ENCODE measurements at regions of chr19 and their contacts with region 1.

Region 1: DNA sequence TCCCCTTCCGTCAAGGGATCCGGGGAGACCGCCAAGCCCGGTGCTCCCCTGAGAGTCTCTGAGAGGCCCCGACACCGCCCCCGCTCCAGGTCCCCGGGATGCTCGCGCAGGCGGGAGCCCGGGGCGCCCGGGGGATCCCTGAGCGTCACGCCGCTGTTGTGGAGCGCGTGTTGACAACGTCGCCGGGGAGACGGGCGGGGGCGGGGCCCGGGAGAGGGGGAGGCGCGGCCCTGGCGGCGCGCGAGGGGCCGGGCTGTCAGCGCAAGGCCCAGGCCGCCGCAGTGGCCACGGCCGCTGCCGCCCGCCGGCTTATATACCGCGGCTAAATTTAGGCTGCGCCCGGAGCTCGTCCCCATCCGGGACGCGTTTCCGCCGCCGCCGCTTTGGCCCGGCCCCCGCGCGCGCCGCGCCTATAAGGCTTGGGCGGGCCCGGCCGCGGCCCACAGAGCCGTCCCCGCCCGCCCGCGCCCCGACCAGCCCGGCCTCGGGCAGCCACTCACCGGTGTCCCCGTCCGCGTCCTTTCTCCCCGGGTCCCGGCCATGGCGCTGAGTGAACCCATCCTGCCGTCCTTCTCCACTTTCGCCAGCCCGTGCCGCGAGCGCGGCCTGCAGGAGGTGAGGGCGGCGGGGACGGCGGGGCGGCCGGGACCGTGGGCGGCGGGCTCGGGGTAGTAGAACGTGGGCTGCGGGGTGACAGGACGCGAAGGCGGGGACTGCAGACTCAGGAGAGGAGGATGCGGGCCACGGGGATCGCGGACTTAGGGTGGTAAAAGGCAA is at the start of gene KLF2:
- DNase-seq: peak; percentile 95 to 97
- ATAC-seq: peak; percentile 69 to 92 (median 84)
- H3K4me3 ChIP-seq: peak within 1 kb of the TSS; percentile 61 to 96 (median 87)
- H3K27ac ChIP-seq: peak within 1 kb of the TSS; percentile 93 to 99 (median 98)
- H3K4me1 ChIP-seq: peaks cover 0 to 50% (median 35%) of the 10 kb centered on the region in 9 donors
- H3K27me3 ChIP-seq: no peaks in the 10 kb centered on the region
- CTCF ChIP-seq: no peak
- total RNA-seq, gene KLF2: 25.5 to 76.2 (median 50.4) TPM

Region 2: DNA sequence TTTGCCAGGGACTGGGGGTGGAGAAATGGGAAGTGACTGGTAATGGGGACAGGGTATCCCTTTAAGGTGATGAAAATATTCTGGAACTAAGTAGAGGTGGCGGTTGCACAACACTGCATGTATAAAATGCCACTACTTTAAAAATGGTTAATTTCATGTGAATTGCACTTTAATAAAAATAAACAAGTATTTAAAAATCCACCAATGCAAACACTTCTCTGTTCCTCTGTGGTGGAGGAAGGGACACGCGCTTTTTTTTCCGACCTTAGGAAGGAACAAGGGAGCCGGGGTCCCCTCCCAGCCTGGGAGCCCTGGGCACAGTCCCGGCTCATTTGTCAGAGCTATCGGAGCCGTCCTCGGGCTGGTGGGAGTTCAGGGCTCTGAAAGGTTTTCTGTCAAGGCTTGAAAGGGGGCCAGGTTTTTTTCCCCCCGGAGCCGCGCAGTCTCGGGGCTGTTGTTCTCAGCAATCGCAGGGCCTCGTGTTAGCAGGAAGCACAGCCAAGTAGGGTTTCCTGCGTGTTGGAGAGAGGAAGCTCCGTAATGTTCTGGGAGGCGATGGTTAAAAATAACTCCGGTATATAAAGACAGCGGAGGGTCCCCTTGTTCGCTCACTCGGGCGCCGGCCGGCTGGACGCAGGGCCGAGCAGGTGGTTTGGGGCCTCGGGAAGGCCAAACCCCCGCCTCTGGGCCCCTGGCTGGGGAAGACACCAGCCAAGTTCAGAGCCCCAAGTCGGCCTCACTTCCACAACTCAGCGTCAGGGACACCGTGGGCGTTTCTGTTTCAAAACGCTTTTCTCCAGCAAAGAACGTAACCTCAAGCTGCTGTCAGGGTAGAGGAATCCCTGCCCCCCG is 41.1 kb before region 1 on chr19:
- intact Hi-C with region 1: loop called in 5 of 10 experiments (anchors 1 to 5 kb)
- DNase-seq: peak; percentile 81 to 94
- ATAC-seq: peak; percentile 88 to 94 (median 92)
- H3K4me3 ChIP-seq: peak overlapping the region in 8 of 10 donors; percentile 19 to 49 (median 38)
- H3K27ac ChIP-seq: peak overlapping the region; percentile 91 to 99 (median 98)
- H3K4me1 ChIP-seq: peaks cover 13 to 89% (median 57%) of the 10 kb centered on the region in 9 donors
- H3K27me3 ChIP-seq: no peaks in the 10 kb centered on the region
- CTCF ChIP-seq: no peak

Region 3: GRCh38 chr19:16371540-16371986 is 47.0 kb after region 1 on chr19:
- intact Hi-C with region 1: loop called in 1 of 10 experiments (anchors 10 kb)
- DNase-seq: peak; percentile 44 to 69
- ATAC-seq: peak in 7 of 8 donors; percentile 56 to 76 (median 65)
- H3K4me3 ChIP-seq: peak overlapping the region in 3 of 10 donors; percentile 2 to 16 (median 5)
- H3K27ac ChIP-seq: peak overlapping the region in 8 of 10 donors; percentile 0 to 83 (median 54)
- H3K4me1 ChIP-seq: peaks cover 12 to 92% (median 43%) of the 10 kb centered on the region in 9 donors
- H3K27me3 ChIP-seq: no peaks in the 10 kb centered on the region
- CTCF ChIP-seq: no peak

Measured in heart right ventricle (tissue), 16 donors.